ENCODE measurements at regions of chr13 and their contacts with region 1.

Region 1: DNA sequence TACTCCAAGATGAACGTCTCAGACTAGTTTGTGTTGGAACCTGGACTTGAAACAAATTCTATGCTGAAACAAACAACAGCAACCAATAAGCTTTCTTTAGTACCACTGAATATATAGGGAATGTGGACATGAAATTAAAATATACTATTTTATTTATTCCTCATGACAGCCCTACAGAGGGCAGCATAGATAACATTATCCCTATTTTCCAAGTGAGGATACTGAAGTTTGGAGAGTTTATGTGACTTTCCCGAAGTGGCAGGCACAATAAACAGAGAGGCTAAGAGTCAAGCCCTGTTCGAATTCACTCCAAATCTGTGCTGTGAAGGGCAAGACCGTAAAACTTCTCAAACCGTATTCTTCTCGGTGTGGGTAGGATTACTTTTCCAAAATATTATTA is 509.9 kb upstream of the GPC6 start:
- DNase-seq: peak; percentile 40
- H3K4me3 Mint-ChIP-seq: no peak overlapping the region
- H3K27ac Mint-ChIP-seq: no peak overlapping the region
- H3K4me1 Mint-ChIP-seq: no peaks in the 10 kb centered on the region
- H3K27me3 Mint-ChIP-seq: no peaks in the 10 kb centered on the region
- CTCF ChIP-seq: peak; percentile 38

Region 2: DNA sequence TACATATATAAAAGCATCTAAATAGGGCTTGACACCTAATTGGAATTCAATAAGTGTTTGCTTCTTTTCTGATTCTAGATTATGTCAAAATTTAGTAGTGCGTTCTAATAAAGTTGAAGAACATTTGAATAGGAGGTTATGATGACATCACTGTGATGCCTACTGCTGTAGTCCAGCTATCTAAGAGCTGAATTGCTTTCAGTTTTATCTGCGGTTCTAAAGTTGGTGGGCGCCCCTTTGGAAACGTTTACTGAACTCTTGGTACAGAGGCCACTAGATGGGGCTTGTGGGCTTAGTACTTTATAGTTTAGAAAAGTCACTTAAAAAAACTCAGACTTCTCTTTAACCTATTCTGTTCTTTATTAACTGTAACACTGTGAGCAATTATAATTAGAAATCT is 541.4 kb before region 1 on chr13:
- CTCF ChIA-PET with region 1: interaction called, 4 read pairs
- POLR2A ChIA-PET with region 1: no interaction called
- intact Hi-C with region 1: loop called (anchors 5 kb)
- DNase-seq: peak; percentile 41
- H3K4me3 Mint-ChIP-seq: no peak overlapping the region
- H3K27ac Mint-ChIP-seq: no peak overlapping the region
- H3K4me1 Mint-ChIP-seq: no peaks in the 10 kb centered on the region
- H3K27me3 Mint-ChIP-seq: peaks cover 16% of the 10 kb centered on the region
- CTCF ChIP-seq: peak; percentile 39

Region 3: DNA sequence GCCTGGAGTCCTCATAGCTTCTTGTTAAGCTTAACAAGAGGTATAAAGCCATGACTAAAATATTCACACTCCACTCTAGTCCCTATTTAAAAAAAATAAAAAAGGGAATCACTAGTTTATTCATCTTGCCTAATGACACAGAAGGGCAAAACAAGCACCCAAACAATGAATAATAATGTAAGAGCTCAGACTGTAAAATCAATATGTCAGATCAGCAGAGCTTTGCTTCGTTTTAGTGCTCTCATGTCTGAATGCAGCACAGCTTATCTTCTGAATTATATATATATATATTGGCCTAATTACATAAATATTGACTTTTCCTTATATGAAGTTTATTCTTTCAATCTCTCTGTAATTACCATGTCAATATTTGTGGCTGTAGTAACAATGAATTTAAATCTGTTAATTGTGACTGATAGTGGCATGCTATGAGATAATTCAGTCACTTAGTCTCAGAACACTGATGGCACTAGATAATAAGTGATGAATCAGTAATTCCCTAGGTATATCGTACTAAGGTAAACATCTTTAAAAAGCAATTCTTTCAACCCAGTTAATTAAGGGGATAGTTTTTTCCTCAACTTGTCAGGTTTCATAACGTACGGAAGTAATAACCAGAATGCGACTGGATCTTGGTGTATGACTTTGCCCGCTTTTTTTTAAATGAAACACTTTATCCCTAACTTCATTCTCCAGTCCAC is 148.0 kb after region 1 on chr13:
- CTCF ChIA-PET with region 1: interaction called, 5 read pairs
- POLR2A ChIA-PET with region 1: interaction called, 3 read pairs
- intact Hi-C with region 1: loop called (anchors 5 kb)
- DNase-seq: no peak
- H3K4me3 Mint-ChIP-seq: no peak overlapping the region
- H3K27ac Mint-ChIP-seq: no peak overlapping the region
- H3K4me1 Mint-ChIP-seq: no peaks in the 10 kb centered on the region
- H3K27me3 Mint-ChIP-seq: no peaks in the 10 kb centered on the region
- CTCF ChIP-seq: no peak